AG04450 (cell line): ENCODE measurements at regions of chrX and their contacts with region 1.

Region 1: DNA sequence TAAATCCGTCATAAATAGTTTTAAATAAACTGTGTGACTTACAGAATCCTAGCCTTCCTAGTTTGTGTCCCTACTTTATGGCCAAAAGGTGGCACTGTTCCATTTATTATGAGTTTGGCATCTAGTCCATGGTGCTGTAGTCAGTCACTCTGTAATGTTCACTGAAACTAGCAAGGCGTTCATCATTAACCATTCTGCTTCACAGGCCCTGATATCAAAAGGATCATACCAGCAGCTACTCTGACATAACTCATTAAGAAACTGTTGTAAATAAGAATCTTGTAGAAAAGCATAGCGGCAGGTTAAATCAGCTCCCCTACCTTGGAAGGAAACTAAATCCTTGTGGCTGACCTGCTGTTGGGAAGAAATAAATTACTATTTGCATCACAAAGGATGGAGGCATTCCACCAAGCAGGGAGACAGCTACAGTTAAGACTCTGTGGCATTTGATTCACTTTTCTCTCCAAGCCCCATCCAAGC is 919.6 kb upstream of the DIAPH2 start:
- DNase-seq: no peak
- H3K4me3 ChIP-seq: no peak overlapping the region
- H3K27ac ChIP-seq: no peak overlapping the region
- H3K27me3 ChIP-seq: no peaks in the 10 kb centered on the region
- CTCF ChIP-seq: peak; percentile 52

Region 2: GRCh38 chrX:95791876-95792275 is 26.9 kb after region 1 on chrX:
- CTCF ChIA-PET with region 1: no interaction called
- POLR2A ChIA-PET with region 1: no interaction called
- DNase-seq: no peak
- H3K4me3 ChIP-seq: no peak overlapping the region
- H3K27ac ChIP-seq: no peak overlapping the region
- H3K27me3 ChIP-seq: no peaks in the 10 kb centered on the region
- CTCF ChIP-seq: no peak

Region 3: GRCh38 chrX:96182366-96182765 is 417.4 kb after region 1 on chrX:
- CTCF ChIA-PET with region 1: interaction called, 17 read pairs
- POLR2A ChIA-PET with region 1: no interaction called
- DNase-seq: peak; percentile 1
- H3K4me3 ChIP-seq: no peak overlapping the region
- H3K27ac ChIP-seq: no peak overlapping the region
- H3K27me3 ChIP-seq: no peaks in the 10 kb centered on the region
- CTCF ChIP-seq: peak; percentile 61